ENCODE measurements at regions of chr6 and their contacts with region 1.

Region 1: GRCh38 chr6:113879186-113880096 is 22.3 kb downstream of the MARCKS start:
- DNase-seq: peak in 1 of 3 donors; percentile 73
- ATAC-seq: peak; percentile 99
- H3K4me3 ChIP-seq: no peak overlapping the region
- H3K4me1 ChIP-seq: peaks cover 13% of the 10 kb centered on the region
- CTCF ChIP-seq: peak; percentile 47

Region 2: DNA sequence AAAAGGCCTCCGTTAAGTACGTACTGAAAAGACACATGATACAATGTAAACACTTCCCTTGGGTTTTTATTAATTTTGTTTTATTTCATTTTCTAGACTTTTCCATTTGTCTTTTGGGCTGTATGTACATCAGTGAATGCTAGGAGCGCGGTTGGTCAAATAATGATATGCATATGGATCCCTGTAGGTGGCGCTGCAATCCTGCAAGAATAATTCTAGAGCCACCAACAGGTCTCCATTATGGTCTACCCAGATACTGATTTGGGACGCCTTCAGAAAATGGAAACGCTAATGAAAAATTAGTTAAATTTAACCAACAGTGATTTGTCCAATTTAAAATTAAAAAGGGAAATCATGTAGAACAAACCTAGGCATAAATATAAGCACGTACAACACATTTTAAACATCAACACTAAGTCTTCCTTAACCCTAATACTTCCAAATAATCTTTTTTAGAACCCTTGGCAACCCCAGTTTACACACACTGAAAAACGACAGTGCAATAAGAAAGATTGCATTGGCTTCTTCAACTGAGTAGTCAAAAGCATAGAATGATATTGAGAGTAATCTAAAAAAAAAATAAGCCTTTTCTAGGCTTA is 1098.8 kb before region 1 on chr6:
- intact Hi-C with region 1: loop called in 1 of 2 experiments (anchors 10 kb)
- DNase-seq: peak in 2 of 3 donors; percentile 36 to 79
- ATAC-seq: peak; percentile 90
- H3K4me3 ChIP-seq: no peak overlapping the region
- H3K4me1 ChIP-seq: no peaks in the 10 kb centered on the region
- CTCF ChIP-seq: peak; percentile 23

Region 3: DNA sequence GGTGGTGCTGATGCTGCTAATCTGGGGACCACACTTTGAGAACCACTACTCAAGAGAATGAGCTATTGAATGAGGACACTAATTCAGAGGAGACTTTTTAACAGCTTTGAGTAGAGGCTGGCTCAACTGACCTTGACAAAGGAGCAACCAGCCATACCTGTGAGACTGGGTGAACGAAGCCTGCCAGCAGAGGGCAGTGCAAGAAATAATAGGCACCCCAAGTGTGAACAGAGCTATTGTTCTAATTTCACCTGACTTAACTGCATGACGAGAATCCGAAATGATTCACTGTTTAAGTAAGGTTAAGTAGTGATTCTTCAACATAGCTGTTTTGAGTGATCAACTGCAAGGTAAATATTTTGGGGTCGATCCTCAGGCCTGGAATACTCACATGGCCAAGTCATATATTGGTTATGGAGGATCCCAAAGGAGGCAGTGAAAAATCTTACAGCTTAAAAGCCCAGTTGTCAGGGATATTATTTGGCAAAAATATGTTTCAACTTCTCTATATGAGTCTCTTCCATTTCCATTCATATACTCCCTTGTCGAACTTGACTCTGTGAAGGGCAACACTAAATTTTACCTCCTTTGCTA is 572.8 kb before region 1 on chr6:
- intact Hi-C with region 1: loop called in 1 of 2 experiments (anchors 5 kb)
- DNase-seq: peak; percentile 62 to 94 (median 72)
- ATAC-seq: peak; percentile 95
- H3K4me3 ChIP-seq: no peak overlapping the region
- H3K4me1 ChIP-seq: no peaks in the 10 kb centered on the region
- CTCF ChIP-seq: no peak

Region 4: DNA sequence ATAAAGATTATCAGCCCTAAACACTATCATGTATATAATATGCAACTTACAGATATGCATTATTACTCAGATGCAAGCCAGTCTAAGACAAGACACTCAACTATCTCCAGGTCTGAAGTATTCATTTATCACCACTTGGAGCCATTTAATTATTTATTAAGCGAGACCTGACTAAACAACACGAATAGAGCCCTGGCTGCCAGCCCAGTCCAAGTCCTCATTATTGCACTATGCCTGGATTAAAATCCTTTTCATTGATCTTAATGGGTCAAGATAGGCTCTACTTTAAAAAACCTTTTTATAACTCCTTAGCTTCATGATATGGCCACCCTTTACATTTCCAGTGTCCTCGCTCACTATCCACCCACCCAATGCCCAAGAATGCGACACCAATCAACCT is 205.4 kb before region 1 on chr6:
- intact Hi-C with region 1: no loop called
- DNase-seq: no peak
- ATAC-seq: no peak
- H3K4me3 ChIP-seq: no peak overlapping the region
- H3K4me1 ChIP-seq: no peaks in the 10 kb centered on the region
- CTCF ChIP-seq: no peak

Region 5: DNA sequence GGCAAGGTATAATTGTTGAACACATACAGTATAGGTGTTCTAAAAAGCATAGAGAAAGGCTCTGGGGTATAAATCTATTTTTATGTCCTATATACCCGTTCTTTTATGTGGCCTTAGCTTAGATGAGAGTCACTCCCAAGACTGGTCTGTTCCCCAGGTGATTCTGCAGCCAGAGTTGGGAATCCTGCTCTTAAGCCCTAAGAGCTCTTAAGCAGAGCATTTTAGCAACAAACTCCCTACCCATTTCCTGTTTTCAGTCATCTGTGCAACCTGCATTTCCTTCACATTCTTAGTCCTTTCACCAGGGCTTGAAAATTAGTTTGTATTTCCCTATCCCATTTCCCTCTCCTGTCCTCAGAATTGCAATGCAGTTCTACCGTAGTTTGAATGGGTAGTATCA is 297.3 kb after region 1 on chr6:
- intact Hi-C with region 1: no loop called
- DNase-seq: no peak
- ATAC-seq: no peak
- H3K4me3 ChIP-seq: no peak overlapping the region
- H3K4me1 ChIP-seq: no peaks in the 10 kb centered on the region
- CTCF ChIP-seq: no peak

Measured in mucosa of descending colon (tissue), 3 donors.